ENCODE measurements at regions of chr17 and their contacts with region 1.

Region 1: GRCh38 chr17:81101614-81102306 is 63.5 kb upstream of the PVALEF start:
- DNase-seq: peak; percentile 79 to 91 (median 86)
- H3K4me3 ChIP-seq: no peak overlapping the region
- H3K27ac ChIP-seq: no peak overlapping the region
- H3K4me1 ChIP-seq: peaks cover 0 to 16% (median 13%) of the 10 kb centered on the region in 4 experiments
- H3K27me3 ChIP-seq: no peaks in the 10 kb centered on the region

Region 2: GRCh38 chr17:80986816-80987475 is 114.8 kb before region 1 on chr17:
- CTCF ChIA-PET with region 1: interaction called, 11 read pairs
- POLR2A ChIA-PET with region 1: no interaction called
- DNase-seq: peak in 2 of 3 donors; percentile 42 to 51
- H3K4me3 ChIP-seq: peak overlapping the region in 1 of 7 experiments; percentile 10
- H3K27ac ChIP-seq: no peak overlapping the region
- H3K4me1 ChIP-seq: peaks cover 2 to 41% (median 34%) of the 10 kb centered on the region in 4 experiments
- H3K27me3 ChIP-seq: no peaks in the 10 kb centered on the region

Region 3: GRCh38 chr17:81018044-81018802 is 83.5 kb before region 1 on chr17:
- CTCF ChIA-PET with region 1: interaction called, 12 read pairs
- POLR2A ChIA-PET with region 1: no interaction called
- DNase-seq: peak in 2 of 3 donors; percentile 62 to 74
- H3K4me3 ChIP-seq: peak overlapping the region; percentile 27 to 84 (median 62)
- H3K27ac ChIP-seq: peak overlapping the region; percentile 69 to 83
- H3K4me1 ChIP-seq: peaks cover 0 to 32% (median 29%) of the 10 kb centered on the region in 4 experiments
- H3K27me3 ChIP-seq: no peaks in the 10 kb centered on the region

Region 4: GRCh38 chr17:81057079-81057730 is 44.6 kb before region 1 on chr17:
- CTCF ChIA-PET with region 1: no interaction called
- POLR2A ChIA-PET with region 1: no interaction called
- DNase-seq: no peak
- H3K4me3 ChIP-seq: no peak overlapping the region
- H3K27ac ChIP-seq: no peak overlapping the region
- H3K4me1 ChIP-seq: no peaks in the 10 kb centered on the region
- H3K27me3 ChIP-seq: no peaks in the 10 kb centered on the region

Region 5: DNA sequence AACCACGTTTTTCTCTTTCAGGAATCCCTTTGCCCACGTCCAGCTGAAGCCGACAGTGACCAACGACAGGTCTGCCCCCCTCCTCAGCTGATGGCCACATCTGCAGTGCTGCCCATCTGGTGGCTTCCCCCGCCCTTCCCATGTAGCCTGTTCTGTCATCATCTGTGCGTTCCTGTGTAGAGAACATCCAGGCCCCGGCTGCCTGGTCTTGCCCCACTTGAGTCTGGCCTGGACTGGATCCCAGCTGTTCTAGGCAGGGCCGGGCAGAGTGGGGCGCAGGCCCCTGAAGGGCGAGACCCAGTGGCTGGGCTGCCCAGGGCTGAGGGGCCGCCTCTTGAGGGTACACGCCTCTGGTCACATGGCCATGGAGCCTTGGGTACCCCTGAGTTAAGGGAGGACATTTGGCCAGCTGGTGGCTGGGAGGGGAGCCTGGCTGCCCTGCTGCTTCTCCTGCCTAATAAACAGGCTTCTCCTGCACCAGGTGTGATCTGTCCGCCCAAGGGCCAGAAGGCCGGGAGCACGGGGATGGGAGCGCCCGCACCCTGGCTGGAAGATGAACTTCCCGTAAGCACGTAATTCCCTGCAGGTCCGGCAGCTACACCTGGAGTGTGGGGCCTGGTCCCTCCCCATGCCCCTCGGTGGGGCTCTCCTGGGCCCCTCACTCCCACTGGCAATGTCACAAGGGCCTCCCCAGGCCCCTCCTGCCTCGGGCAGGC is 14.1 kb after region 1 on chr17:
- CTCF ChIA-PET with region 1: interaction called, 16 read pairs
- POLR2A ChIA-PET with region 1: no interaction called
- DNase-seq: no peak
- H3K4me3 ChIP-seq: no peak overlapping the region
- H3K27ac ChIP-seq: no peak overlapping the region
- H3K4me1 ChIP-seq: peaks cover 0 to 16% (median 9%) of the 10 kb centered on the region in 4 experiments
- H3K27me3 ChIP-seq: no peaks in the 10 kb centered on the region

Region 6: GRCh38 chr17:81948635-81949378 is 847.0 kb after region 1 on chr17:
- CTCF ChIA-PET with region 1: no interaction called
- POLR2A ChIA-PET with region 1: no interaction called
- DNase-seq: no peak
- H3K4me3 ChIP-seq: no peak overlapping the region
- H3K27ac ChIP-seq: no peak overlapping the region
- H3K4me1 ChIP-seq: peaks cover 0 to 12% (median 4%) of the 10 kb centered on the region in 4 experiments
- H3K27me3 ChIP-seq: peaks cover 0 to 4% (median 0%) of the 10 kb centered on the region in 5 experiments